MCF 10A (cell line): ENCODE measurements at regions of chr10 and their contacts with region 1.

Region 1: DNA sequence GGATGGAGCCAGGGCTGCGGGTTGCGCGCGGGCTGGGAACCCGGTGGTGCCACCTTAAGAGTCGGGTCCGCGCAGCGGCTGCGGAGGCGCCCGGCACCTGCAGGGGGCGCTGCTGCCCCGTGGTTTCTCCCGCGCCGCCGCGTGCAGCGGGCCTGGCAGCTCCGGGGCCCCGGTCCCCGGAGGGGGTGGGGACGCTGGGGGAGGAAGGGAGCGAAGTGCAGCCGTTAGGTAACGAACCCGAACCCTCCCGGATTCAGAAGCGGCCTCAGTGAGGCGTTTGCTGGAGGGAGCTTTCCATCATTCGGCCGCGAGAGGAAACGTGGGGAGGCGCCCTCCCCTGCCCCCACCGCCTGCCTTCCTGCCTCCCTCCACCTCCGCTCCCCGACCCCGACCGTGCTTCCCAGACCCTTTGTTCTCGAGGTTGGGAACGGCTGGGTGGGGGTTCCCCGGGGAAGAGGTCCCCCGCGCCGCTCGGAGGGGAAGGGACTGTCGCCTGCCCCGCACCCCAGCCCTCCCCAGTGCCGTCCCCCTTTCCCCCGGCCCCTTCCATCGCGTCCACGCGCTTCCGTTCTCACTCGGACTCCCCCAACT is 29.6 kb downstream of the SKIDA1 start:
- DNase-seq: peak; percentile 92
- H3K4me3 Mint-ChIP-seq: peak overlapping the region; percentile 82
- H3K27ac Mint-ChIP-seq: peak overlapping the region; percentile 64
- H3K4me1 Mint-ChIP-seq: no peaks in the 10 kb centered on the region
- H3K27me3 Mint-ChIP-seq: peaks cover 21% of the 10 kb centered on the region
- CTCF ChIP-seq: peak; percentile 96

Region 2: GRCh38 chr10:21217107-21217506 is 278.7 kb before region 1 on chr10:
- CTCF ChIA-PET with region 1: no interaction called
- POLR2A ChIA-PET with region 1: no interaction called
- intact Hi-C with region 1: no loop called
- DNase-seq: no peak
- H3K4me3 Mint-ChIP-seq: no peak overlapping the region
- H3K27ac Mint-ChIP-seq: no peak overlapping the region
- H3K4me1 Mint-ChIP-seq: no peaks in the 10 kb centered on the region
- H3K27me3 Mint-ChIP-seq: no peaks in the 10 kb centered on the region
- CTCF ChIP-seq: no peak

Region 3: GRCh38 chr10:21278491-21279239 is 217.2 kb before region 1 on chr10:
- CTCF ChIA-PET with region 1: interaction called, 68 read pairs
- POLR2A ChIA-PET with region 1: interaction called, 9 read pairs
- intact Hi-C with region 1: loop called (anchors 1 kb)
- DNase-seq: peak; percentile 95
- H3K4me3 Mint-ChIP-seq: no peak overlapping the region
- H3K27ac Mint-ChIP-seq: no peak overlapping the region
- H3K4me1 Mint-ChIP-seq: peaks cover 8% of the 10 kb centered on the region
- H3K27me3 Mint-ChIP-seq: no peaks in the 10 kb centered on the region
- CTCF ChIP-seq: peak; percentile 92

Region 4: DNA sequence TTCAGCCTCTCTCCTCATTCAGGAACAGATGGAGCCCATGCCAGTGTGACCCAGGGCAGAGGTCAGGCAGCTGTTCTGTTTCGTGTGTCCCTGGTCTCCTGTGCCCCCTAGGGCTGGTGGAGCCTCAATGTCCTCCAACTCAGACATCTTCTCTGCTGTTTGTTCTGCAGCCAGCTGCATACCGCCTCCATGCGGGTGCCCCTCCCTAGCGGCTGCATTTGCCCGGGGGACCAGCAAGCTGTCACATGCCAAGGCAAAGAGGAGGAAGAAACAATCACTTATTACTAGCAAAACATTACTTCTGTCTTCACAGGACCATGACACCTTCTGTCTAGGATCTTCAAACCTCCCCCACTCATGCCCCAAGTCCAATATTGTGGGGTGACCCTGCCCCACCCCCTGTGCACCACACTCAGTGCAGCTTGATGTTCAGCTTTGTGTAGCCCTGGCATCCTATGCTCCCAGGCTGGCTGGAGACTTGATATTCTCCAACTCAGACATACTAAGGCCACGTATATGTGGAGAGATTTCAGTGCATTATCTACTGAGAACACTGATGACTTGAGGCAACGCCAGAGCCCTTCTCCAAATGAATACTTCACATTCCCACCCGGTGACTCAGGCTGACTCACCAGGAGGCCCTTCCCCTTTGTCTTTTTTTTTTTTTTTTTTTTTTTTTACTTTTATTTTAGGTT is 159.2 kb before region 1 on chr10:
- CTCF ChIA-PET with region 1: interaction called, 5 read pairs
- POLR2A ChIA-PET with region 1: interaction called, 5 read pairs
- intact Hi-C with region 1: loop called (anchors 2 kb)
- DNase-seq: peak; percentile 97
- H3K4me3 Mint-ChIP-seq: peak overlapping the region; percentile 54
- H3K27ac Mint-ChIP-seq: peak overlapping the region; percentile 83
- H3K4me1 Mint-ChIP-seq: peaks cover 40% of the 10 kb centered on the region
- H3K27me3 Mint-ChIP-seq: no peaks in the 10 kb centered on the region
- CTCF ChIP-seq: peak; percentile 8

Region 5: GRCh38 chr10:21516242-21517131 is 20.6 kb after region 1 on chr10:
- CTCF ChIA-PET with region 1: interaction called, 11 read pairs
- POLR2A ChIA-PET with region 1: interaction called, 20 read pairs
- intact Hi-C with region 1: loop called (anchors 2 kb)
- DNase-seq: peak; percentile 50
- H3K4me3 Mint-ChIP-seq: peak overlapping the region; percentile 85
- H3K27ac Mint-ChIP-seq: no peak overlapping the region
- H3K4me1 Mint-ChIP-seq: peaks cover 18% of the 10 kb centered on the region
- H3K27me3 Mint-ChIP-seq: no peaks in the 10 kb centered on the region
- CTCF ChIP-seq: no peak

Region 6: DNA sequence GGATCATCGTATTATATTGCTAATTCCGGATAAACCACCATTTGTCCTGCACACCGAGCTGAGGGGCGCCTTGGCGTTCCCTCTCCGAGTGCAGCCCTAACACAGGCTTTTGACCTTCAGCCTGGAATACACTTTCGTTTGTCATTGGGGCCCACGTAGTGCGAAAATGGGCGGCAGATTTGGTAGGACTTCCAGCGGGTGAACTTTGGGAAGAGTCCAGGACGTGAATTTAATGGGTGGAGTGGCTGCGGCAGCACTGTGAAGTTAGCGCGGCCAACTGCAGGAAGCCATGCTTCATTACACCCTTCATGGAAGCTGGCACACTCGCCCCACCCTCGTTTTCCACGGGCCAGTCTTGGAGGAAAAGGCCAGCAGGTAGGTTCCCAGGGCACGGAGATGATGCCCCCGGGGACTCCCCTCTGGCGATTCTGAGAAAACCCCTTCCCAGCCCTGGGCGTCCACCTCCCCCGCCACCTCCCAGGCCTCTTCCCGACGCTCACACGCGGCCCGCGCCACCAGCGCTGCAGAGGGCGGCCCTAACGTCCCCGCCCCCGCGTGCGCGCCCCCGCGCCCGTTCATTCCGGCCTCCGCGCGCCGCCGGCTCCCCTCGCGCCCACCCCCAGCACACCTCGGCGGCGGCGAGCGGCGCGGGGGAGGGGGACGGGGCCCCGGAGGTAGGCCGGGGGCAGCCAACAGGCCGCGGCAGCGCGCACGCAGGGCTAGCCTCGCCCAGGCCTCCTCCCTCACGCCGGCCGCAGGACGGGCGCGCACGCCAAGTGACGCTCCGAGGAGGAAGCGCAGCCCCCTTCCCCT is 37.8 kb after region 1 on chr10 and contains the start of gene MLLT10:
- CTCF ChIA-PET with region 1: interaction called, 6 read pairs
- POLR2A ChIA-PET with region 1: interaction called, 141 read pairs
- intact Hi-C with region 1: no loop called
- DNase-seq: peak; percentile 94
- H3K4me3 Mint-ChIP-seq: peak within 1 kb of the TSS; percentile 84
- H3K27ac Mint-ChIP-seq: peak within 1 kb of the TSS; percentile 97
- H3K4me1 Mint-ChIP-seq: peaks cover 6% of the 10 kb centered on the region
- H3K27me3 Mint-ChIP-seq: no peaks in the 10 kb centered on the region
- CTCF ChIP-seq: no peak
- total RNA-seq, gene MLLT10: 39.3 and 47.5 TPM in 2 replicates

Region 7: GRCh38 chr10:21732067-21732772 is 236.4 kb after region 1 on chr10:
- CTCF ChIA-PET with region 1: interaction called, 3 read pairs
- POLR2A ChIA-PET with region 1: interaction called, 3 read pairs
- intact Hi-C with region 1: loop called (anchors 5 kb)
- DNase-seq: peak; percentile 41
- H3K4me3 Mint-ChIP-seq: no peak overlapping the region
- H3K27ac Mint-ChIP-seq: no peak overlapping the region
- H3K4me1 Mint-ChIP-seq: peaks cover 14% of the 10 kb centered on the region
- H3K27me3 Mint-ChIP-seq: no peaks in the 10 kb centered on the region
- CTCF ChIP-seq: peak; percentile 52